Activated B cell treated with CpG ODN at 0.5 μM for 24 hours (primary cell): ENCODE measurements at regions of chr18 and their contacts with region 1.

Region 1: GRCh38 chr18:76803814-76804213 is 18.5 kb upstream of the ZNF236 start:
- DNase-seq: peak; percentile 41
- ATAC-seq: peak; percentile 69
- H3K4me3 Mint-ChIP-seq: no peak overlapping the region
- H3K27ac Mint-ChIP-seq: no peak overlapping the region
- H3K4me1 Mint-ChIP-seq: peaks cover 11% of the 10 kb centered on the region
- H3K27me3 Mint-ChIP-seq: peaks cover 3% of the 10 kb centered on the region
- CTCF ChIP-seq: peak; percentile 86

Region 2: DNA sequence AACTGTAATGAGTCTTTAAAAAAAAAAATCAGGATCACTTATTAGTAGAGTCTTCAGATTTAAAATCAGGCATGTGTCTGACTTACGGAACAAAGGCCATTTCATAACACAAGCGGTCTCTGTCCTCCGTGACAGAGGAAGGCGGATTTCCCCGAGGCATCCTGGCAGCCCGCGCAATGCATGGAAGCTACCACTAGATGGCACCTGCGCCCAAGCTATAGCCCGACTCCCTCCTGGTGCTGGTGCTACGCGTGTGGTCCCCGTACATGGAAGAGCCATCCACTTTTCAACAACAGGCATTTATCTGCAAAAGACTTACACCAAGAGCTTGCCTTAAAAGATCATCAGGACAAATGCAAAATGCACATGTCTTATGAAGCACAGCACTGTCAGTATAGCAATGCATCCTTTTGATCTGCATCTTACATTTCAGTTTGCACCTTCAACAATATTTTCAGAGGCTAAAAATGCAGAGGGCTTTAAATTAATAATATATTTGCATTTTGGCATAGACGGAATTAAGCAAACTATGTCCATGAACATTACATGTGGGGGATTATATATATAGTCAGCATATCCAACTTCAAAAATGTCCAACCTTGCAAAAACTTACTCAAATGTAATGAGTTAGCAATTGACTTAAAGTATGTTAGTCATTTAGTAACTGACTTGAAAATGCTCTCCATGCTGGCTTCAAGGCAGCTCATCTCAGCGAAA is 404.8 kb before region 1 on chr18:
- CTCF ChIA-PET with region 1: no interaction called
- POLR2A ChIA-PET with region 1: no interaction called
- intact Hi-C with region 1: loop called (anchors 10 kb)
- DNase-seq: peak; percentile 66
- ATAC-seq: peak; percentile 95
- H3K4me3 Mint-ChIP-seq: no peak overlapping the region
- H3K27ac Mint-ChIP-seq: no peak overlapping the region
- H3K4me1 Mint-ChIP-seq: peaks cover 7% of the 10 kb centered on the region
- H3K27me3 Mint-ChIP-seq: no peaks in the 10 kb centered on the region
- CTCF ChIP-seq: peak; percentile 94

Region 3: GRCh38 chr18:76822510-76823160 is 18.8 kb after region 1 on chr18 and contains the start of gene ZNF236:
- CTCF ChIA-PET with region 1: interaction called, 39 read pairs
- POLR2A ChIA-PET with region 1: interaction called, 4 read pairs
- intact Hi-C with region 1: loop called (anchors 1 kb)
- DNase-seq: peak; percentile 79
- ATAC-seq: peak; percentile 58
- H3K4me3 Mint-ChIP-seq: peak within 1 kb of the TSS; percentile 95
- H3K27ac Mint-ChIP-seq: peak within 1 kb of the TSS; percentile 97
- H3K4me1 Mint-ChIP-seq: peaks cover 64% of the 10 kb centered on the region
- H3K27me3 Mint-ChIP-seq: no peaks in the 10 kb centered on the region
- CTCF ChIP-seq: no peak
- total RNA-seq, gene ZNF236: 27.4 and 28.2 TPM in 2 replicates

Region 4: DNA sequence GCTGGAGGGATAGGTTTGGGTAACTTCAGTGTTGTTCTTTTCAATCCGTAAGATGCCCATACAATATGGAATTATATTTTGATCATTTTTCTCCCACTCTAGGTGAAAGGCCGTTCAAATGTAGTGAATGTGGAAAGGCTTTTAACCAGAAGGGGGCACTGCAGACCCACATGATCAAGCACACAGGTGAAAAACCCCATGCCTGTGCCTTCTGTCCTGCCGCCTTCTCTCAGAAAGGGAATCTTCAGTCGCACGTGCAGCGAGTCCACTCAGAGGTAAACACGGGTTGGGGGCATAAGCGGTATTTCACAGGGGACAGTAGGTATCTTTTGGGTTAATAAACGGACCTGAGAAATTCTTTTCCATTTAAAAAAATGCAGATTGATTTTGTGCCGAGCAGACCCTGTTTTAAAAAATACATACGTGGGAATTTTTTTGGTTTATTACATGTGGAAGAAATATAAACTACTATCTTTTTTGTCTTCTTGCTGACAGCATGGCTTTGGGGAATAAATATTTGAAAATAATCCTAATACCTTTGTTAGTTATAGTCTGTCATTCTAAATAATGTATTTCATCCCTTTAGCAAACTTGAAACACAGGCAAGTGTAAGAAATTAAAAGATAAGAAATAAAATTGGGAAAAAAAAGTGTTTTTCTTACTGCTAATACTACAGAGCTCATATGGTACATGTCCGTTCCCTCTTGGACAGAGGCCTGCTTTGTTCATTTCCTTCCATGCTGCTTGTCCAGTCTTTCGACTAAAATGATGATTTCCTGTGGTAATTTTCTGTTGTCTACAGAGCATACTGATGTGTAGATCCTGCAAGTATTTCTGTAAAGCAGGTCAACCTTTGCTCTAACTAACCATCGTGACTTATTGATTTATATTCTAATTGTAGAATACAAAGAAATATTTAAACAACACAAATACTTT is 71.8 kb after region 1 on chr18:
- CTCF ChIA-PET with region 1: interaction called, 4 read pairs
- POLR2A ChIA-PET with region 1: no interaction called
- intact Hi-C with region 1: loop called (anchors 1 kb)
- DNase-seq: no peak
- ATAC-seq: no peak
- H3K4me3 Mint-ChIP-seq: no peak overlapping the region
- H3K27ac Mint-ChIP-seq: no peak overlapping the region
- H3K4me1 Mint-ChIP-seq: no peaks in the 10 kb centered on the region
- H3K27me3 Mint-ChIP-seq: no peaks in the 10 kb centered on the region
- CTCF ChIP-seq: no peak

Region 5: GRCh38 chr18:76982841-76983587 is 179.2 kb after region 1 on chr18:
- CTCF ChIA-PET with region 1: interaction called, 24 read pairs
- POLR2A ChIA-PET with region 1: no interaction called
- intact Hi-C with region 1: loop called (anchors 1 kb)
- DNase-seq: peak; percentile 80
- ATAC-seq: peak; percentile 79
- H3K4me3 Mint-ChIP-seq: peak overlapping the region; percentile 35
- H3K27ac Mint-ChIP-seq: peak overlapping the region; percentile 69
- H3K4me1 Mint-ChIP-seq: peaks cover 56% of the 10 kb centered on the region
- H3K27me3 Mint-ChIP-seq: no peaks in the 10 kb centered on the region
- CTCF ChIP-seq: no peak

Region 6: GRCh38 chr18:77470569-77471413 is 667.0 kb after region 1 on chr18:
- CTCF ChIA-PET with region 1: interaction called, 4 read pairs
- POLR2A ChIA-PET with region 1: no interaction called
- intact Hi-C with region 1: loop called (anchors 2 kb)
- DNase-seq: no peak
- ATAC-seq: no peak
- H3K4me3 Mint-ChIP-seq: no peak overlapping the region
- H3K27ac Mint-ChIP-seq: no peak overlapping the region
- H3K4me1 Mint-ChIP-seq: no peaks in the 10 kb centered on the region
- H3K27me3 Mint-ChIP-seq: peaks cover 10% of the 10 kb centered on the region
- CTCF ChIP-seq: no peak

Region 7: DNA sequence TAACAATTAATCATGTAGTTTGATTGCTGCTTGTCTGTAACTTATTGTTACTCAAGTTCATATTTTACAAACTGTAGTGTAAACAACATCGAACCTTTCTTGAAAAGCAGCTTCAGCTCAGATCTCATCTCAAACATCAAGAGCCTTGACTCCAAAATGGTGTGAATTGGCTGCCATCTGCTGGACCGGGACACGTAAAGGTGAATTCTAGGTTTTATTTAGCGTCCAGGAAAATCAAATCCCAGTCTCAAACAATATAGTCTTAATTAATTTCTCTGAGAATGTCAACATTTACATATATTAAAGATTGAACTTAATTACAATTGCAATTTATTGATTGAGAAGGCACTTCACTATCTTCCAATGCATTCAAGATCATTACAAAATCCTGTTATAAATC is 898.9 kb after region 1 on chr18:
- CTCF ChIA-PET with region 1: interaction called, 3 read pairs
- POLR2A ChIA-PET with region 1: no interaction called
- intact Hi-C with region 1: loop called (anchors 1 kb)
- DNase-seq: no peak
- ATAC-seq: no peak
- H3K4me3 Mint-ChIP-seq: no peak overlapping the region
- H3K27ac Mint-ChIP-seq: no peak overlapping the region
- H3K4me1 Mint-ChIP-seq: no peaks in the 10 kb centered on the region
- H3K27me3 Mint-ChIP-seq: peaks cover 10% of the 10 kb centered on the region
- CTCF ChIP-seq: no peak